Activated naive CD4-positive, alpha-beta T cell treated with anti-CD3 and anti-CD28 coated beads for 36 hours (primary cell): ENCODE measurements at regions of chr1 and their contacts with region 1.

Region 1: DNA sequence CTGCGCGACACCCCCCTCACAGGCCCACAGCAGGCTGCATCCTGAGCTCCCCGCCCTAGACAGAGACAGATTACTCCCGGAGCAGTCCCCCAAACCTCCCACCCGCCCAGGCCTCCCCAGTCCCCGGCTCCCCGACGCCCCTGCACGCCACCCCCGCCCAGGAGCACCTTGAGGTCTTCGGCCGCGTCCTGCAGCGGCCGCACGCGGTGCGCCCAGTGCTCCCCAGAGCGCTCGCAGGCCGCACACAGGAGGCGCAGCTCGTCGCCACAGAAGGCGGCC is 709 bp downstream of the TRIM11 start:
- DNase-seq: peak; percentile 17
- H3K4me3 Mint-ChIP-seq: peak overlapping the region; percentile 87
- H3K27ac Mint-ChIP-seq: peak overlapping the region; percentile 73
- H3K4me1 Mint-ChIP-seq: peaks cover 43% of the 10 kb centered on the region
- H3K27me3 Mint-ChIP-seq: no peaks in the 10 kb centered on the region

Region 2: DNA sequence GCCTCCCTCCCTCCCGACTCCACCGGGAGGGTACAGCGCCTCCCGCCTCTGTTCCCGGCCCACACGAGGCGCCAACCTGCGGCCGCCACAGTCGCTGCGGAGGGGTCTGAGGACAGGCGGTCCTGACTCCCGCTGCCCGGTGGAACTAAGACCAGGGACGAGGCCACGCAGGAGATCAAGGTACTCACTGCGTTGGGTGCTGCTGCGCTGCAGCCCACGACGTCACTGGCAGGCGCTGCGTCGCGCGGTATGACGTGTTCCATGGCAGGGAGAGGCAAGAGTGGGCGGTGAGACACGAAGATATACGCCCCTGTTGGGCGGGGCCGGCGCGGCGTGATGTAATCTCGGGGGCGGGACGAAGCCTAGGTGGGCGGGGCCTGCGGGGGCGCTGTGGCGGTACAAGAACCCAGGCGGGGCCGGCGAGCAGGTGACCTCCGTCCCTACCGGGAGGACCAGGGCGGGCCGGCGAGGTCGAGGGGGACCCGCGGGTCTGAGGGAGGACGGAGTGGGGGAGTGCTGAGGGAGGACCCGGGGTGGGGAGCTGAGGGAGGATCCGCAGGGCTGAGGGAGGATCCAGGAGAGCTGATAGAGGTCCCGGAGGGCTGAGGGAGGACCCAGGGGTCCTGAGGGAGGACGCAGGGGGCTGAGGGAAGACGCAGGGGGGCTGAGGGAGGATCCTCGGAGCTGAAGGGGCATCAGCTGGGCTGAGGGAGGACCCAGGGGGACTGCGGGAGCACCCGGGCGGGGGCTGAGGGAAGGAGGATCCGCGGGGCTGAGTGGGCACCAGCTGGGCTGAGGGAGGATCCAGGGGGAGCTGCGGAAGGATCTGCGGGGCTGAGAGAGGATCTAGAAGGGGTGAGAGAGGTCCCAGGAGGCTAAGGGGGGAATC is 296.6 kb before region 1 on chr1 and contains the start of gene MRPL55:
- CTCF ChIA-PET with region 1: no interaction called
- intact Hi-C with region 1: loop called (anchors 1 kb)
- DNase-seq: peak; percentile 98
- H3K4me3 Mint-ChIP-seq: peak within 1 kb of the TSS; percentile 91
- H3K27ac Mint-ChIP-seq: peak within 1 kb of the TSS; percentile 85
- H3K4me1 Mint-ChIP-seq: peaks cover 27% of the 10 kb centered on the region
- H3K27me3 Mint-ChIP-seq: no peaks in the 10 kb centered on the region
- total RNA-seq, gene MRPL55: 45.5 TPM

Region 3: GRCh38 chr1:228212966-228213844 is 192.7 kb before region 1 on chr1:
- CTCF ChIA-PET with region 1: no interaction called
- intact Hi-C with region 1: loop called (anchors 2 kb)
- DNase-seq: peak; percentile 92
- H3K4me3 Mint-ChIP-seq: peak overlapping the region; percentile 83
- H3K27ac Mint-ChIP-seq: peak overlapping the region; percentile 50
- H3K4me1 Mint-ChIP-seq: no peaks in the 10 kb centered on the region
- H3K27me3 Mint-ChIP-seq: no peaks in the 10 kb centered on the region

Region 4: GRCh38 chr1:228416217-228416933 is 10.4 kb after region 1 on chr1 and contains the start of gene TRIM17:
- CTCF ChIA-PET with region 1: no interaction called
- intact Hi-C with region 1: loop called (anchors 1 kb)
- DNase-seq: peak; percentile 59
- H3K4me3 Mint-ChIP-seq: peak within 1 kb of the TSS; percentile 78
- H3K27ac Mint-ChIP-seq: no peak within 1 kb of the TSS
- H3K4me1 Mint-ChIP-seq: peaks cover 13% of the 10 kb centered on the region
- H3K27me3 Mint-ChIP-seq: peaks cover 5% of the 10 kb centered on the region
- total RNA-seq, gene TRIM17: 1.0 to 1.2 TPM